Activated CD4-positive, alpha-beta T cell treated with anti-CD3 and anti-CD28 coated beads for 36 hours (primary cell): ENCODE measurements at regions of chrX and their contacts with region 1.

Region 1: DNA sequence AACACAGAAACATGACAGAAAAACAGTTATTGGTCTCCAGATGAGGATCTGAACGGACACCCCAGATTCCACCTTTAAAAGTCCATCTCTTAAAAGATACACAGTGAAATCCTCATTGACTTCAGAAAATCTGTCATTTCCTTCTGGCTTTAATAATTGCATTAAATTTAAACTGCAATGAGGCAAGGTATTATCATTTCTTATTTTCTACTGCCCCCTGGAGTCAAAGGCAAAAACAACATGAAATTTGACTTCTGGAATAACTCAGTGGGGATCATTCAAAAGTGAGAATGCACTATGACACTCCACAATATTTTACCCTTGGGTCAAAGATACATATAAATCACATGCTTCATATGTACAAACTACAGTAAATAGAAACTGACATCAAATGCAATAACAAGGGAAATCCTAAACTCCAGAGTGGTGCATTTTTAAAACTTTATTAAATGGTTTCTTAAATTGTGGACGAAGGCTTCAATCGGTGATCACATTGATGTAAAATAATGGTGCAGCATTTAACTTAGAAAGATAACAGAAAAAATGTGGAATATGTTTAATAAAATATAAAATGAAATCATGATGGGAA is 56.4 kb upstream of the SPANXN1 start:
- DNase-seq: no peak
- ATAC-seq: no peak
- H3K4me3 Mint-ChIP-seq: no peak overlapping the region
- H3K27ac Mint-ChIP-seq: no peak overlapping the region
- H3K4me1 Mint-ChIP-seq: no peaks in the 10 kb centered on the region
- H3K27me3 Mint-ChIP-seq: no peaks in the 10 kb centered on the region

Region 2: GRCh38 chrX:143669395-143669794 is 1521.5 kb before region 1 on chrX:
- CTCF ChIA-PET with region 1: no interaction called
- POLR2A ChIA-PET with region 1: no interaction called
- intact Hi-C with region 1: loop called in 1 of 2 experiments (anchors 5 kb)
- DNase-seq: no peak
- ATAC-seq: no peak
- H3K4me3 Mint-ChIP-seq: no peak overlapping the region
- H3K27ac Mint-ChIP-seq: no peak overlapping the region
- H3K4me1 Mint-ChIP-seq: no peaks in the 10 kb centered on the region
- H3K27me3 Mint-ChIP-seq: no peaks in the 10 kb centered on the region

Region 3: DNA sequence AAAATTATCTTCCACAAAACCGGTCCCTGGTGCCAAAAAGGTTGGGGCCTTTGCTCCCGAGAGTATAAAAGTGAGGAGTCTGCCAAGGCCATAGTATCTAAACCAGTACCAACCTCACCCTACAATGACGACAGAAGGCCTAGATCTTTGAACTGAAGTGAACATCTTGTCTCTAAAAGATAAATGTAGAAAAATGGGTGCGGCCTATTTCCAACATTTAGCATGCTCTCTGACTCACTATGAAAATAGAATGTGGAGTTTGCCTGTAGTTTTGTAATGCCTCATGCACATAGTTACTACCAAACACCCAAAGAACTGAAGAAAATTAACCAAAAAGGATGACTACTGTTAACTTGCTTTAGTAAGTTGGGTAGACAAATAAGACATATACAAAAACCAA is 845.1 kb after region 1 on chrX:
- CTCF ChIA-PET with region 1: no interaction called
- POLR2A ChIA-PET with region 1: no interaction called
- intact Hi-C with region 1: no loop called
- DNase-seq: no peak
- ATAC-seq: no peak
- H3K4me3 Mint-ChIP-seq: no peak overlapping the region
- H3K27ac Mint-ChIP-seq: no peak overlapping the region
- H3K4me1 Mint-ChIP-seq: no peaks in the 10 kb centered on the region
- H3K27me3 Mint-ChIP-seq: no peaks in the 10 kb centered on the region

Region 4: DNA sequence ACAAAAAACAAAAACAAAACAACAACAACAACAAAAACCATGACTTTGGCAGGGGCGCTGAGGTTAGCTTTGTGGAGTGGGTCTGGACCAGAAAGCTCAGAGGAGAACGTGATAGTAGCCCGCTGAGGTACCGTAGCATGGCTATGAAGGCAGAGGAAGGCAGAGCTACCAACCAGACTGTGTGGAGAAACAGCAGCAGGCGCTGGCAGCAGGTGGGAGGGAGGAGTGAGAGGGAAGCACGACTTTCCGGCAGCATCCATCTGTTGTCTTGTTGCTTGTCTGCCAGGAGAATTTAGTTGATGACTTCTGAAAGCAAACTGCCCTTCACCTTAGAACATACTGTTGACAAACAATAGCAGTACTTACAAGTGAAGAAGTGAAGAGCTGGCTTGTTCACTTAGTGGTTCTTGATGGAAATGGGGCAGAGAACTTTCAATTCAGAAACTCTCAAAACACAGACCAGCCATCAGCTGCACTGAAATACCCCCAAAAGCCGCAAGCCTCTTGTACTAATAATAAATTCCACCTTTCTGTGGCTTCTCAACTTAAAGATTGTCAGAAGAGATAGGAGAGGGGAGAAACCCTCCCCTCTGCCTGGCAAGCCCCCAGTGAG is 1074.0 kb after region 1 on chrX:
- CTCF ChIA-PET with region 1: no interaction called
- POLR2A ChIA-PET with region 1: no interaction called
- intact Hi-C with region 1: no loop called
- DNase-seq: no peak
- ATAC-seq: no peak
- H3K4me3 Mint-ChIP-seq: no peak overlapping the region
- H3K27ac Mint-ChIP-seq: no peak overlapping the region
- H3K4me1 Mint-ChIP-seq: no peaks in the 10 kb centered on the region
- H3K27me3 Mint-ChIP-seq: no peaks in the 10 kb centered on the region